ENCODE measurements at regions of chr15 and their contacts with region 1.

Region 1: DNA sequence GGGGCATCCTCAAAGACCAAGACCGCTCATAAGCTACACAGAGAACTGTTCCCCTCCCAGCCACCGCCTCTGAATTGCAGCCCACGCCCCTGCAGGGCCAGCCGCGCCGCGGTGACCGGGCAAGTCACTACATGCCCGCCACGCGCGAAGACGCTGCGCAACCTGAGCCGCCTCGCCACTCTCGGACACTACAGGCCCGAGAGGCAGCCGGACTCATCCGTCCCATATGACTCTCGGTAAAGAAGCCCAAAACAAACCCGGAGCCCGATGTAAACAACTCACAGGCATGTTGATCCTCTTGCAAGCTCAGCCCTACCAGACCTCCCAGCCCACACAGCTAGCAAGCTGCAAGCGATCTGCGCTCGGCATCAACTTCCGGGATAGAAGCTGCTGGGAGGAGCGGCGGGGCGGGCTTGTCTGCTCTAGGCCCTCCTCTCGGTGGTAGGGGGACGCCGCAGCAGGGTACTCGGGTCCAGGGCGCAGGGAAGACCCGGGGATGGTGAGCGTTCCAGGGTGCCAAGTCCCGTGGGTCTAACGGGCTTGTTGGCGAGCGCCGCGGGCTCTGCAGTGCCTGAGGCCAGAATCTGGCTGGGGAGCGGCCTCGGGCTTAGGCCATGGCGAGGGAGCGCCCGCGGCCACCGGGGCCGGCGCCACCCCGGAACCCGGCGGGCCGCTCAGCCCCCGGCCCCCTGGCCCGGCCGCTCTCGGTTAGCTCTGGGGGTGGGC is at the start of gene RPS27L:
- DNase-seq: peak; percentile 93
- H3K4me3 Mint-ChIP-seq: peak within 1 kb of the TSS; percentile 96
- H3K27ac Mint-ChIP-seq: peak within 1 kb of the TSS; percentile 96
- H3K4me1 Mint-ChIP-seq: peaks cover 17% of the 10 kb centered on the region
- H3K27me3 Mint-ChIP-seq: no peaks in the 10 kb centered on the region
- total RNA-seq, gene RPS27L: 139 to 140 TPM

Region 2: DNA sequence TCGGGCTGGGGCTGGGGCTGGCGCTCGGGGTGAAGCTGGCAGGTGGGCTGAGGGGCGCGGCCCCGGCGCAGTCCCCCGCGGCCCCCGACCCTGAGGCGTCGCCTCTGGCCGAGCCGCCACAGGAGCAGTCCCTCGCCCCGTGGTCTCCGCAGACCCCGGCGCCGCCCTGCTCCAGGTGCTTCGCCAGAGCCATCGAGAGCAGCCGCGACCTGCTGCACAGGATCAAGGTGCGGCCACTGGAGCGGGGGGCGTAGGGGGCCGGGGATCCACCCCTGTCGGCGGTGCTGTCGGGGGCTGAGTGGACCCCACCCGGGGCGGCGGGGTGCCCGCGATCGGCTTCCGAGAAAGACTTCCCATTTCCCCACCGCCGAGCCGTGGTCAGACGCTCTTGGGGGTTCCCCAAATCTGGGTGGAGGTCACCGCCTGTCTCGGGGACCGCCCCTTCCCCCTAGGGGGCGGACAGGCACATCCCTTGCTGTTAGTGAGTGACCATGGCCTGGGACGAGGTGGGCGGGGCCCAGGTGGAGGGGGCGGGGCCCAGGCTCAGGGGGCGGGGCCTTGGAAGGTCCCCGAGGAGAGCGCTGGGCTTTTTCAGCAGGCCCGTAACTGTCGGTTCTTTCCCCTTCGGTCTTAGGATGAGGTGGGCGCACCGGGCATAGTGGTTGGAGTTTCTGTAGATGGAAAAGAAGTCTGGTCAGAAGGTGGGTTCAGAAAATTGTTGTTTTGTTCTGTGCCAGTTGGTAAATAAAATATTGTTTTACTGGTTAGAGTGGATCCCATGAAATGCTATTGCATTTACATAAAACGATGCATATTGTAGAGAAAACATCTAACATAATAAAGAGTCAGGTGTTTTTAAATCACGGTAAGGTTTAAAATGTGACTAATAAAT is 35.0 kb before region 1 on chr15:
- CTCF ChIA-PET with region 1: no interaction called
- POLR2A ChIA-PET with region 1: no interaction called
- intact Hi-C with region 1: loop called (anchors 1 kb)
- DNase-seq: peak; percentile 95
- H3K4me3 Mint-ChIP-seq: peak overlapping the region; percentile 89
- H3K27ac Mint-ChIP-seq: peak overlapping the region; percentile 78
- H3K4me1 Mint-ChIP-seq: peaks cover 14% of the 10 kb centered on the region
- H3K27me3 Mint-ChIP-seq: no peaks in the 10 kb centered on the region

Region 3: GRCh38 chr15:63172376-63173109 is 15.3 kb after region 1 on chr15:
- CTCF ChIA-PET with region 1: no interaction called
- POLR2A ChIA-PET with region 1: interaction called, 4 read pairs
- intact Hi-C with region 1: loop called (anchors 1 kb)
- DNase-seq: no peak
- H3K4me3 Mint-ChIP-seq: no peak overlapping the region
- H3K27ac Mint-ChIP-seq: no peak overlapping the region
- H3K4me1 Mint-ChIP-seq: peaks cover 11% of the 10 kb centered on the region
- H3K27me3 Mint-ChIP-seq: no peaks in the 10 kb centered on the region

Region 4: GRCh38 chr15:63244399-63244798 is 87.1 kb after region 1 on chr15:
- CTCF ChIA-PET with region 1: interaction called, 3 read pairs
- POLR2A ChIA-PET with region 1: interaction called, 4 read pairs
- intact Hi-C with region 1: loop called (anchors 5 kb)
- DNase-seq: no peak
- H3K4me3 Mint-ChIP-seq: no peak overlapping the region
- H3K27ac Mint-ChIP-seq: peak overlapping the region; percentile 60
- H3K4me1 Mint-ChIP-seq: peaks cover 51% of the 10 kb centered on the region
- H3K27me3 Mint-ChIP-seq: no peaks in the 10 kb centered on the region

Region 5: GRCh38 chr15:63277038-63277892 is 120.0 kb after region 1 on chr15 and contains the start of gene APH1B:
- CTCF ChIA-PET with region 1: no interaction called
- POLR2A ChIA-PET with region 1: interaction called, 6 read pairs
- intact Hi-C with region 1: loop called (anchors 5 kb)
- DNase-seq: peak; percentile 80
- H3K4me3 Mint-ChIP-seq: peak within 1 kb of the TSS; percentile 80
- H3K27ac Mint-ChIP-seq: peak within 1 kb of the TSS; percentile 59
- H3K4me1 Mint-ChIP-seq: peaks cover 20% of the 10 kb centered on the region
- H3K27me3 Mint-ChIP-seq: no peaks in the 10 kb centered on the region
- total RNA-seq, gene APH1B: 6.6 to 7.0 TPM